GM12878 (cell line): ENCODE measurements at regions of chr3 and their contacts with region 1.

Region 1: GRCh38 chr3:46266598-46266997 is 24.3 kb downstream of the CCR3 start:
- DNase-seq: no peak
- ATAC-seq: no peak
- H3K4me3 ChIP-seq: no peak overlapping the region
- H3K27ac ChIP-seq: no peak overlapping the region
- H3K4me1 ChIP-seq: peaks cover 7% of the 10 kb centered on the region
- H3K27me3 ChIP-seq: 0 out of 4 replicates have a peak, but pooled peaks cover 0 to 6% of the 10 kb centered on the region in 2 experiments
- CTCF ChIP-seq: no peak
- EP300 ChIP-seq: no peak
- POLR2A ChIP-seq: no peak
- RAD21 ChIP-seq: no peak

Region 2: DNA sequence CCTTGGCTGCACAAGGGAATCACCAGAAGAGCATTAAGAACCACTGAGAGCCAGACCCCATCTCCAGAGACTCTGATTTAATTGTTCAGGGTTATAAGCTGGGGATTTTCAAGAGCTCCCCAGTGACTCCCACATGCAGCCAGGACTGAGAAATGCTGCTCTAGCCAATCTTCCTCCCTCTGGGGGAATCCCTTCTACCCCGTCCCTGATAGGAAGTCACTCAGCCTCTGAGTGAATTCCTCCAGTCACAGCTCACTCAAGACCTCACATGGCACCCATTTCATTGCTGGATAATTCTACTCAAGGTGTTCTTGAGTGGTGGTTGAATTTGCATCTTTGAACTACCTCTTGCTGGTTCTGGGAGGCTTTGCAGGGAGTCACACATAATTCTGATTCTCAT is 13.6 kb before region 1 on chr3:
- CTCF ChIA-PET with region 1: no interaction called
- POLR2A ChIA-PET with region 1: interaction called, 11 read pairs
- RAD21 ChIA-PET with region 1: interaction called, 4 read pairs
- SMC1A ChIA-PET with region 1: no interaction called
- in situ Hi-C with region 1: no loop called
- intact Hi-C with region 1: no loop called
- DNase-seq: no peak
- ATAC-seq: peak; percentile 49
- H3K4me3 ChIP-seq: no peak overlapping the region
- H3K27ac ChIP-seq: no peak overlapping the region
- H3K4me1 ChIP-seq: no peaks in the 10 kb centered on the region
- H3K27me3 ChIP-seq: no peaks in the 10 kb centered on the region
- CTCF ChIP-seq: no peak
- EP300 ChIP-seq: no peak
- POLR2A ChIP-seq: no peak
- RAD21 ChIP-seq: no peak

Region 3: GRCh38 chr3:46276502-46277099 is 10.0 kb after region 1 on chr3:
- CTCF ChIA-PET with region 1: interaction called, 22 read pairs
- POLR2A ChIA-PET with region 1: no interaction called
- RAD21 ChIA-PET with region 1: interaction called, 4 read pairs
- SMC1A ChIA-PET with region 1: interaction called, 5 read pairs
- in situ Hi-C with region 1: no loop called
- intact Hi-C with region 1: no loop called
- DNase-seq: no peak
- ATAC-seq: peak; percentile 90
- H3K4me3 ChIP-seq: no peak overlapping the region
- H3K27ac ChIP-seq: no peak overlapping the region
- H3K4me1 ChIP-seq: peaks cover 27% of the 10 kb centered on the region
- H3K27me3 ChIP-seq: 0 out of 4 replicates have a peak, but pooled peaks cover 0 to 2% of the 10 kb centered on the region in 2 experiments
- CTCF ChIP-seq: peak; percentile 67 to 87 (median 85)
- EP300 ChIP-seq: no peak
- POLR2A ChIP-seq: no peak
- RAD21 ChIP-seq: peak; percentile 83

Region 4: DNA sequence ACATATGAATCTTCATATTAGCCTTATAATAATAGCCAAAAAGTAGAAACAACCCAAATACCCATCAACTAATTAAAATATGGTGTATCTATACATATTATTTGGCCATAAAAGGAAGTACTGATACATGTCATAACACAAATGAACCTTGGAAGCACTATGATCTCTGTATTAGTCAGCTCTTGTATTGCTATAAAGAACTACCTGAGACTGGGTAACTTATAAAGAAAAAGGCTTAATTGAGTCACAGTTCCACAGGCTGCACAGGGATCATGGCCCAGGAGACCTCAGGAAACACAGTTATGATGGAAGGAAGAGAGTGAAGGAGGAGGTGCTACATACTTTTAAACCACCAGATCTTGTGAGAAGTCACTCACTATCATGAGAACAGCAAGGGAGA is 71.3 kb after region 1 on chr3:
- CTCF ChIA-PET with region 1: no interaction called
- POLR2A ChIA-PET with region 1: no interaction called
- RAD21 ChIA-PET with region 1: no interaction called
- SMC1A ChIA-PET with region 1: no interaction called
- in situ Hi-C with region 1: no loop called
- intact Hi-C with region 1: no loop called
- DNase-seq: no peak
- ATAC-seq: no peak
- H3K4me3 ChIP-seq: no peak overlapping the region
- H3K27ac ChIP-seq: no peak overlapping the region
- H3K4me1 ChIP-seq: no peaks in the 10 kb centered on the region
- H3K27me3 ChIP-seq: no peaks in the 10 kb centered on the region
- CTCF ChIP-seq: no peak
- EP300 ChIP-seq: no peak
- POLR2A ChIP-seq: no peak
- RAD21 ChIP-seq: no peak